ENCODE measurements at regions of chr1 and their contacts with region 1.

Region 1: DNA sequence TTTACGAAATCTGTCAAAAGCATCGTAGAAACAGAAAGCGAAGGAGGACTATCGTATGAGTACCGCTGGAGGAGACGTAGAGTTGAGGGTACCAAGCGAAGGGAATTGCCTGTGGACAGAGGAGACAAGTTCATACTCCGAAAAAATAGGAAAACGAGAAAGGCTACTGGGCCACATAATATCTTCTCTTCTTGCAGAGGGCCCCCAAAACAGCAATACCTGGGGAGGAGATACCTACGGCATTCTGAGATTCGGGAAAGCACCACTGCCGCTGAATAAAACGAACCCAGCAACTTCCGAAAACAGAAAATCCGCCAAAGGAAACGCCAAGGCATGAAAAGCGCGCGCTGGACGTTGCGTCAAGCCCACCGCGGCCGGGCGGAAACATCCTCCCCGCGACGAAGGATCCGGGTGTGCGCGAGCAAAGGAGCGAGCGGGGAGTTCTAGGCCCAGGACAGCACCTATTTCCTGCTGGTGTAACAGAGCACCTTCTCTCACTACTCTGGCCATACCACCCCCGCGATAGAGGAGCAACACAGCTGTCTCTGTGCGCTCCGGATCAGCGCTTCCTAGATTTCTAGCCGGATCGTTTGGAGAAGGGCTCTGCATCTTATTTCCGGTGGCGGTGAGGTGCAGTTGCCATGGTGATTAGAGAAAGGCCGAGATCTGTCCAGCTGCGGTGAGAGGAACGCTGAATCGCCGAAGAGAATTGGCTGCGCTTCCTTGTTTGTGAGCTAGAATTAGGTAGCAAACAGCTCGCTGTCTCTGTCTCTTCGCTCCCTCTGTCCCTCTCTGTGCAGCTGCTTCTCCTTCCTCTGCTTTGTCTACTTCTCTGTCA is at the starts of genes EFCAB7 and ITGB3BP:
- DNase-seq: peak; percentile 96
- H3K4me3 Mint-ChIP-seq: peak within 1 kb of the TSS; percentile 87
- H3K27ac Mint-ChIP-seq: peak within 1 kb of the TSS; percentile 98
- H3K4me1 Mint-ChIP-seq: peaks cover 29% of the 10 kb centered on the region
- H3K27me3 Mint-ChIP-seq: no peaks in the 10 kb centered on the region
- total RNA-seq, gene EFCAB7: 6.6 and 7.8 TPM in 2 replicates
- total RNA-seq, gene ITGB3BP: 51.1 and 53.4 TPM in 2 replicates

Region 2: GRCh38 chr1:63367215-63368103 is 155.7 kb before region 1 on chr1 and contains the start of gene ALG6:
- intact Hi-C with region 1: loop called (anchors 1 kb)
- DNase-seq: peak; percentile 99
- H3K4me3 Mint-ChIP-seq: peak within 1 kb of the TSS; percentile 99
- H3K27ac Mint-ChIP-seq: peak within 1 kb of the TSS; percentile 93
- H3K4me1 Mint-ChIP-seq: peaks cover 15% of the 10 kb centered on the region
- H3K27me3 Mint-ChIP-seq: peaks cover 14% of the 10 kb centered on the region
- total RNA-seq, gene ALG6: 24.5 and 27.7 TPM in 2 replicates

Region 3: GRCh38 chr1:63537940-63538339 is 14.8 kb after region 1 on chr1:
- intact Hi-C with region 1: no loop called
- DNase-seq: no peak
- H3K4me3 Mint-ChIP-seq: no peak overlapping the region
- H3K27ac Mint-ChIP-seq: no peak overlapping the region
- H3K4me1 Mint-ChIP-seq: no peaks in the 10 kb centered on the region
- H3K27me3 Mint-ChIP-seq: no peaks in the 10 kb centered on the region